ENCODE measurements at regions of chr2 and their contacts with region 1.

Region 1: GRCh38 chr2:207692206-207693065 is 19.0 kb upstream of the CCNYL1 start:
- DNase-seq: peak; percentile 61
- H3K4me3 ChIP-seq: no peak overlapping the region
- H3K27ac ChIP-seq: no peak overlapping the region
- H3K4me1 ChIP-seq: peaks cover 10% of the 10 kb centered on the region
- H3K27me3 ChIP-seq: no peaks in the 10 kb centered on the region
- CTCF ChIP-seq: peak; percentile 56 to 63
- POLR2A ChIP-seq: no peak

Region 2: DNA sequence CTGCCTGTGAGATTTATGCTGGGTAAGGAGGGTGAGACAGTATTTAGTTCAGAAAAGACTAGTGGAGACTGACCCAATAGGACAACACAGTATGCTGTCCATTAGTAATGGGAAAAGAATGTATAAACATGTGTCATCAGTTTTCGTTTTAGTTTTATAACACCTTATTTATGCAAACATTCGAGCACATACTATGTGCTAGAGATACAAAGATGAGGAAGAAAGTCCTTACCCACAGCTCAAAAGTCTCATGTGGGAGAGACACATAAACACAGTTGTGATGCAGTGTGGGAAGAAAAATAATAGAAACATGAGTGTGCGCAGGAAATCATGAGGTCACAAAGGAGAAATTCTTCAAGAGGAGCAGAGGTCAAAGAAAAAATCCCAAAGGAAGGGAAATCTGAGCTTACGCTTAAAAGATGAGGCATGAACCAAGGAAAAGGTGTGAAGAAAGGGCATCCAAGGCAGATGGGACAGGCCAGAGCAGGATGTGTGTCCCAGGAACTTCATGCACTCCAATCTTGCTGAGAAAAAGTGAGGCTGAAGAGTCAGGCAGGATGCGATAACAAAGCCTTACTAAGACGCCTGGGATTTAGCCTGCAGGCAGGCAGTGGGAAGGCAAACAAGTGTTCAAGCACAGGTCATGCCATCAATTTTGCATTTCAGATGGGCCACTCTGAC is 75.3 kb before region 1 on chr2:
- CTCF ChIA-PET with region 1: no interaction called
- POLR2A ChIA-PET with region 1: no interaction called
- dilution Hi-C with region 1: no loop called
- intact Hi-C with region 1: no loop called
- DNase-seq: peak; percentile 92
- H3K4me3 ChIP-seq: peak overlapping the region in 1 of 3 experiments; percentile 2
- H3K27ac ChIP-seq: peak overlapping the region; percentile 73
- H3K4me1 ChIP-seq: peaks cover 18% of the 10 kb centered on the region
- H3K27me3 ChIP-seq: no peaks in the 10 kb centered on the region
- CTCF ChIP-seq: no peak
- POLR2A ChIP-seq: no peak

Region 3: DNA sequence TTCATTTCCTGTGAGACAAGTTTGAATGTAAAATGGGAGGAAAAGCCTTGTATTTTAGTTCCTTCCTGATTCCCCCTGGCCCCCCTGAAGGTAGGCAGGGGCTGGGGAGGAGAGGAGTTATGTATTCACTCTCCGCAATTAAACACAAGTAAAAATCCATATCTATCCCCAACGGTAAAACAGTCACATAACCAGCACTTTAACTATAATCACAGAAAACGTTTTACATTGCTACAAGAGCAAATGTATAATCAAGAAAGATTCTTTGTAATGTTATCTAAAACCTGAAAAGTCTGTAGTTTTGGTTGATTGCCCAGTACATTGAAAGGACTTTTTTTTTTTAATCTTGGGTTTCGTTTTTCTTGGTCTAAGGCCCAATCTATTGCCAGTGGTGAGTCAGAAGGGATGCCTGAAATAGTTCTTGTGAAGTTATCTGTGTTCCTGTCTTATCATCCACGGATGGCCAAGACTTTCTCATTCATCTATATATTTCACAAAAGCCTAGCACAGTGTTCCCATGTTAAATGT is 15.5 kb before region 1 on chr2:
- CTCF ChIA-PET with region 1: interaction called, 20 read pairs
- POLR2A ChIA-PET with region 1: no interaction called
- dilution Hi-C with region 1: no loop called
- intact Hi-C with region 1: no loop called
- DNase-seq: peak; percentile 89
- H3K4me3 ChIP-seq: peak overlapping the region; percentile 16 to 70 (median 29)
- H3K27ac ChIP-seq: peak overlapping the region; percentile 94
- H3K4me1 ChIP-seq: peaks cover 17% of the 10 kb centered on the region
- H3K27me3 ChIP-seq: no peaks in the 10 kb centered on the region
- CTCF ChIP-seq: no peak
- POLR2A ChIP-seq: peak; percentile 24

Region 4: DNA sequence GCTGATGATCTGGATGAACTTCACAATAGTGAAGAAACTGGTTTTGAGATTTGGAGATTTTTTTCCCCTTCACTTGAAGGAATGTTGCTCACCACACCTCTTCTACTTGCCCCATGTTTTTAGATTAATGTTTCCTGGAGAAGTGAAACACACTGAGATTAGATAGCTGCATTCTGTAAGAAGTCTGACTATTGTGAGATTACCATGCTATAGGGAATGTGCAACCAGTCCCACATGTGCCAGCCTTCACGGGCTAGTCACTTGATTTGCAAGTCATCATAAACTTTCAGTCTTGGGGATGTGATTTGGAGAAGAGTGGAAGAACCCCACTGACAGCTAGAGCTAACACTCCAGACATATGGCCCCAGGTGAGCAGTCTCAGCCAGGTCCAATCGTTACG is 11.6 kb after region 1 on chr2:
- CTCF ChIA-PET with region 1: interaction called, 79 read pairs
- POLR2A ChIA-PET with region 1: no interaction called
- dilution Hi-C with region 1: no loop called
- intact Hi-C with region 1: no loop called
- DNase-seq: no peak
- H3K4me3 ChIP-seq: no peak overlapping the region
- H3K27ac ChIP-seq: no peak overlapping the region
- H3K4me1 ChIP-seq: peaks cover 2% of the 10 kb centered on the region
- H3K27me3 ChIP-seq: no peaks in the 10 kb centered on the region
- CTCF ChIP-seq: no peak
- POLR2A ChIP-seq: no peak

Region 5: DNA sequence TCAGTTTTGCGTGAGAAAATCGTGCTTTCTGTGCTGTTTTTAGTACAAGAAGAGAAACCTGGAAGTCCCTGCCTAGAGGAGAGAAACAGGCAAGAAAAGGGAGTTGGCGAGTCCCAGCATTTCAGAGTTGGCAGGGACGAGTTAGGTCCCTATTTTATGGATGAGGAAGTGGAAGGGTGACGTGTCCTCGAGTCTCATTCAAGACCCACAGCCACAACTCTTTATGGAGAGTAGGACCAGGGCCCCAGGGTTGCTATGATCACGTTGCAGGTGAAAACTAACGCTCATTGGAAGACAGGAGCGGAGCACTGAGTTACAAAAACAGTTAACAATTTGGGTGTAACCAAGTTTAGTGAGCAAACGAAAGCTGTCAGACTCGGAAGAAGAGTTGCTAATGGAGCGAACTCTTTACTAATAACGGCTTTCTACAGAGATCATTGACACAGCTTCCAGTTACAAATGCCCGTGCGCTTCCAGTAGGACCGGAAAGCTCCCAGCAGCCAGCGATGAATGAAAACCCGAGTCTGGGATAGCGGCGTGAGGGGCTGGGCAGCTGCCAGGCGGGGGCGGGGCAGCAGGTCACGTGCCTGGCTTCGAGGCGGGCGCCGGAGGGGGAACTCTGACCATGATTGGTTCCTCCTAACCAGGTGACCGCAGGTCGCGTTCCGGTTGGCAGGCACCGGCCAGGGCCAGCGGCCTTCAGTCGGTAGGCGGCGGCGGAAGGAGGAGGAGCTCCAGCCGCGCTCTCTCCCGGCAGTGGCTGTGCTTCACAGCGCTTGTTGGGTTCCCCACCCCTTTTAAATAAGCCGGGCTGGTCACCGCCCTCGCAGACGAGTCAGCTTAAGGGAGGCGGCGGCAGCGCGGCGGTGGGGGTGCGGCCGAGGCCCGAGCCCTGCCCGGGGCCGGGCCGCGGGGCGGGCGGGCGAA is 18.6 kb after region 1 on chr2 and contains the start of gene CCNYL1:
- CTCF ChIA-PET with region 1: interaction called, 79 read pairs
- POLR2A ChIA-PET with region 1: interaction called, 7 read pairs
- dilution Hi-C with region 1: no loop called
- intact Hi-C with region 1: loop called (anchors 1 kb)
- DNase-seq: peak; percentile 100
- H3K4me3 ChIP-seq: peak within 1 kb of the TSS; percentile 78 to 88 (median 78)
- H3K27ac ChIP-seq: peak within 1 kb of the TSS; percentile 86
- H3K4me1 ChIP-seq: peaks cover 21% of the 10 kb centered on the region
- H3K27me3 ChIP-seq: no peaks in the 10 kb centered on the region
- CTCF ChIP-seq: peak in 1 of 2 donors; percentile 3
- POLR2A ChIP-seq: peak; percentile 69
- total RNA-seq, gene CCNYL1: 47.3 and 49.3 TPM in 2 replicates

Region 6: GRCh38 chr2:207725873-207726578 is 33.6 kb after region 1 on chr2:
- CTCF ChIA-PET with region 1: interaction called, 13 read pairs
- POLR2A ChIA-PET with region 1: no interaction called
- dilution Hi-C with region 1: no loop called
- intact Hi-C with region 1: no loop called
- DNase-seq: peak; percentile 62
- H3K4me3 ChIP-seq: no peak overlapping the region
- H3K27ac ChIP-seq: no peak overlapping the region
- H3K4me1 ChIP-seq: peaks cover 20% of the 10 kb centered on the region
- H3K27me3 ChIP-seq: no peaks in the 10 kb centered on the region
- CTCF ChIP-seq: no peak
- POLR2A ChIP-seq: no peak

Region 7: DNA sequence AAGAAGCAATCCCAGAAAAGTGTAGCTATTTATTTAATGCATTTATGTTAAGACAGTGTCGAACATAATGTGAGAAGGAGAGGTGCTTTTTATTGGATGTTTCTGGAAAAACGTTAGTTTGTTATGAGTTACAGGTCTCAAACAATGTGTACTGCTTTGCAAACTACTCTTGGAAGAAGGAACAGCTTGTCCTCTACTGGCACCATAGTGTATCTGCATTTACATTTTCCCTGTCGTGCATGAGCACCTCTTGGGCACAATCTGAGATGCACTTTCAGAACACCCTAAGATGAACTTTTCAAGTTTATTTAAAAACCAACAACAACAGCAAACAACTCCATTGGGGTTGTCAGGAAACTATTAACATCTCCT is 41.8 kb after region 1 on chr2:
- CTCF ChIA-PET with region 1: interaction called, 17 read pairs
- POLR2A ChIA-PET with region 1: no interaction called
- dilution Hi-C with region 1: no loop called
- intact Hi-C with region 1: loop called (anchors 2 kb)
- DNase-seq: peak; percentile 54
- H3K4me3 ChIP-seq: no peak overlapping the region
- H3K27ac ChIP-seq: no peak overlapping the region
- H3K4me1 ChIP-seq: no peaks in the 10 kb centered on the region
- H3K27me3 ChIP-seq: no peaks in the 10 kb centered on the region
- CTCF ChIP-seq: peak; percentile 15 to 57
- POLR2A ChIP-seq: no peak

Region 8: DNA sequence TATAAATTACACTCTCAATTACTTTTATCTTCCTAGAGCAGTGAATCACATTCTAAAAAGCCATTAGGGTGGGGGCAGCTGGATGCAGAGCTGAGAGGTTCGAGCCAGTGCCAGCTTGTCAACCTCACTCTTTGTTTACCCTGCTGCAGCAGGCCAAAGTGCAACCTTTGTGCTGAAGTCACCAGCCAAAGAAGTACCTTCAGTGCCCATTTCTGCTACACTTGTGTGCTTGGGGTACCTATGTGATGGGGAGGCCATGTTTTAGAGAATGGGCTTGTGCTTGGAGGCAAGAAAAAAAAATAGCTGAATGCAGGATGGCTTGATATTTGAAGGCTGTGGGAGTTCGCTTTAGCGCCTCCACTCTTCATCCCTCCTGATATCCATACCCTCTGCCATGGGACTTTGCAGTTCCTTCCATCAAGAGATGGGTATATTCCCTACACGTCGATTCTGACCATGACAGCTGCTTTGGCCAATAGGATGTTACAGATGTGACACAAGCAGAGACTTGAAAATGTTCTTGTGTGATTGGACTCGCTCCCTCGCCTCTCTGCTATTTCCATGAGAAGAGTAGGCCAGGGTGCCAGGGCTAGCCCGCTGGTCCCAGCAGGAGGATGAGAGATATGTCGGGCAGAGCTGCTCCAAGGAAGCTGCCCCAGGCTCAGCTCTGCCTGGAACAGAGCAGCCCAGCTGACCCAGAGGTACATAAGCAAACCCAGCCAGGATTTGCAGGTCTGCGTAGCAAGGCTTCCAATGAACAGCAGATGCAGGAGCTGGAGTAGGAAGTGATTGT is 90.0 kb after region 1 on chr2:
- CTCF ChIA-PET with region 1: no interaction called
- POLR2A ChIA-PET with region 1: no interaction called
- dilution Hi-C with region 1: no loop called
- intact Hi-C with region 1: no loop called
- DNase-seq: no peak
- H3K4me3 ChIP-seq: no peak overlapping the region
- H3K27ac ChIP-seq: no peak overlapping the region
- H3K4me1 ChIP-seq: no peaks in the 10 kb centered on the region
- H3K27me3 ChIP-seq: peaks cover 0 to 4% of the 10 kb centered on the region in 2 experiments
- CTCF ChIP-seq: no peak
- POLR2A ChIP-seq: no peak